WTC11 (cell line): ENCODE measurements at regions of chr10 and their contacts with region 1.

Region 1: GRCh38 chr10:112307358-112308124 is 24.3 kb downstream of the TECTB start:
- DNase-seq: peak; percentile 79
- ATAC-seq: peak; percentile 98
- H3K4me3 Mint-ChIP-seq: no peak overlapping the region
- H3K27ac Mint-ChIP-seq: no peak overlapping the region
- H3K4me1 Mint-ChIP-seq: peaks cover 11% of the 10 kb centered on the region
- H3K27me3 Mint-ChIP-seq: no peaks in the 10 kb centered on the region; the same call in 1 of the 2 replicates
- CTCF ChIP-seq: peak; percentile 88

Region 2: GRCh38 chr10:111996103-111996502 is 311.4 kb before region 1 on chr10:
- CTCF ChIA-PET with region 1: no interaction called
- POLR2A ChIA-PET with region 1: no interaction called
- DNase-seq: no peak
- ATAC-seq: no peak
- H3K4me3 Mint-ChIP-seq: no peak overlapping the region
- H3K27ac Mint-ChIP-seq: no peak overlapping the region
- H3K4me1 Mint-ChIP-seq: peaks cover 25% of the 10 kb centered on the region
- H3K27me3 Mint-ChIP-seq: peaks cover 5% of the 10 kb centered on the region
- CTCF ChIP-seq: no peak

Region 3: DNA sequence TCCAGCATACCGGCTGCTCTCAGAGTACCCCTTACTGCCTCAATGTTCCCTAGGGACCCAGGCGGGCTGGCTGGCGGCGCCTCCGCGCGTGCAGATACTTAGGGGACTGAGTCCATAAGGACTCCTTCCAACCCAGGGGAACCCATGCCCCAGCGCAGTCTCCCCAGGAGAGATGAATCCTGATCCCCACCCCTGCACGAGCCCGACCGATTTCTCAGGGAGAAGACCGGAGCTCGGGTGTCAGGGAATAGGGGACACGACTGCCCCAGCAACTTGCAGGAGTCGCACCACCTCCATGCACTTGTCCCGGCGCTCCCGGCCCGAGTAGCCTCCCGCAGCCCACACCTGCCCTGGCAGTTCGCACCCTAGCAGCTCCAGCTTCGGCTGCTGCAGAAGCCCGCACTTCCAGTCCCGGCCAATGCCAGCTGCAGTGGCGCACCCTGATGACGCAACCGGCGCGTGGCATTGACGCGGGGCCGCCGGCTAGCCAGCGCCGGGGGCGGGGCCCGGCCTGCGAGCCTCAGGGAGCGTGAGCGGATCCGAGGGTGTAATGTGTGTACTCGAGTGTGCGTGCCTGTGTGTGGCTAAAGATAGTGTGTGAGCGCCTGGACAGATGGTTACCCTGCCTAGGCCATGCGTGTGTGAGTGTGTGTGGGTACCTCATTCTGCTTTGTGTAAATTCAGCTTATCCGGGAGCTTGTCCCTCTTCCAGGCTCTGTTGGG is 124.1 kb before region 1 on chr10 and contains the start of gene GPAM:
- CTCF ChIA-PET with region 1: interaction called, 46 read pairs
- POLR2A ChIA-PET with region 1: interaction called, 3 read pairs
- DNase-seq: peak; percentile 96
- ATAC-seq: peak; percentile 90
- H3K4me3 Mint-ChIP-seq: peak within 1 kb of the TSS; percentile 95
- H3K27ac Mint-ChIP-seq: peak within 1 kb of the TSS; percentile 96
- H3K4me1 Mint-ChIP-seq: peaks cover 15% of the 10 kb centered on the region
- H3K27me3 Mint-ChIP-seq: no peaks in the 10 kb centered on the region
- CTCF ChIP-seq: no peak
- total RNA-seq, gene GPAM: 10.7 to 12.2 TPM (median 11.3 TPM) in 3 replicates

Region 4: DNA sequence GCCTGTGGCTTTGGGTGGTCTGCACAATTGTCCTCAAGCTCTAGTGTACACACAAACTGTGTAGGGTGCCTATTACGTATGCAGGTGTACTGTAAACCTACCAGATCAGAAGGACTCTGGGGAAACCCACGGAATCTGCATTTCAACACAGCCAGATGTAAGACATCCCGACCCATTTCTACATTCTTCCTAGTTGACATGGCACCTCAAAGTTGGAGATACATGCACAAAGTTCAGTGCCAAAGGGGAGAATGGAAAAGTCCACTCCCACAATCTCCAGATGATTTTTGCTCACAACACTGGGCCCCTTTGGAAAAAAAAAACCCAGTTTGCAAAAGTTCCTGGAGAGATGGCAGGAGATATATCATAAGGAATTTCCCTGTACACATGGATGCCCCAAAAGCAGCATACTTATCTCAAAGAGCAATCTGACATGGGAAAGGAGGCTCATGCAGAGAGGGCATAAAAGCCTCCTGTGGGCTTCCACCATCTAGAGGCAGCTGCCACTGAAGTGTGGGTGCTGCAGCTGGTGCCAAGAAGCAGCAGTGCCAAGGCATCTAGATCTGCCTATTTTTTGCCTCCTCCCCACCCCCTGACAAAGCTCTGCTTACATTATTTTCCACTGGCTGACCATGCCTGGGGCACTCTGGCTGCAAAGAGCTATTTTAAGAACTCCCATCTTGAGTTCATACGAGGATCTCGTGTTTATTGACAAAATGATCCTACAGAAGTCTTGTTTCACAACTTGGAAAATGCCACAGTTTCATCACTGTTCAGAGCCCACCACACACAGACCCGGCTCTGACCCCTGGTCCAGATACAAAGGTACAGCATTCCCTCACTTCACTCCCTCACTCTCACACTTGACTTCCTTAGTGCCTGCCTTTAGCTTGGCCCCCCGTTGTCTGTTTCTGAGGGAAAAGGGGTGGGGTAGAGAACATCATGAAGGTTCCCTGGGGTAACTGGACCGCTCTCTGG is 11.4 kb before region 1 on chr10:
- CTCF ChIA-PET with region 1: interaction called, 13 read pairs
- POLR2A ChIA-PET with region 1: interaction called, 4 read pairs
- DNase-seq: no peak
- ATAC-seq: no peak
- H3K4me3 Mint-ChIP-seq: no peak overlapping the region
- H3K27ac Mint-ChIP-seq: no peak overlapping the region
- H3K4me1 Mint-ChIP-seq: no peaks in the 10 kb centered on the region
- H3K27me3 Mint-ChIP-seq: peaks cover 4% of the 10 kb centered on the region
- CTCF ChIP-seq: no peak